ENCODE measurements at regions of chr17 and their contacts with region 1.

Region 1: DNA sequence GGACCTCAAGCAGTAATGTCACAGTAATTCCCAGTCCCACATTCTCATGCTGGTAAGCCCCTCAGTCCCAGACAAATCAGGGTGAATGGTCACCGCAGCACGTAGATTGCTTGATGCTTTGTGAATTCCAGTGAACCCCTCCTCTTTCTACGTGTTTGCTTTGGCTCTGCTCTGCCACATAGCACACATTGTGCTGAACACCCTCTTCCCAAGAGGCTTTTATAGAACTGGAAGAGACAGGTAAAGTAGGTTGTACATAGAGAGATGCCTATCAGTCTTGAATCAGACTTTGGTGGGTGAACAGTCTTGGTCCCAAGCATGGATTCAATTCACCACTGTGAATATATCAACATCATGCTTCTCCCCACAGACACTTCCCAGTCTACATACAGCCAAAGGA is 579 bp upstream of the KRTAP9-6 start:
- DNase-seq: no peak
- ATAC-seq: no peak
- H3K4me3 ChIP-seq: no peak overlapping the region
- H3K4me3 Mint-ChIP-seq: no peak overlapping the region
- H3K27ac ChIP-seq: no peak overlapping the region
- H3K27ac Mint-ChIP-seq: no peak overlapping the region
- H3K4me1 ChIP-seq: no peaks in the 10 kb centered on the region
- H3K4me1 Mint-ChIP-seq: peaks cover 0 to 27% (median 15%) of the 10 kb centered on the region in 7 donors
- H3K27me3 ChIP-seq: no peaks in the 10 kb centered on the region
- H3K27me3 Mint-ChIP-seq: peaks cover 0 to 33% (median 5%) of the 10 kb centered on the region in 5 donors

Region 2: GRCh38 chr17:41278176-41278955 is 13.8 kb after region 1 on chr17:
- CTCF ChIA-PET with region 1: no interaction called
- POLR2A ChIA-PET with region 1: no interaction called
- intact Hi-C with region 1: loop called in 1 of 2 experiments (anchors 1 kb)
- DNase-seq: no peak
- ATAC-seq: no peak
- H3K4me3 ChIP-seq: no peak overlapping the region
- H3K4me3 Mint-ChIP-seq: no peak overlapping the region
- H3K27ac ChIP-seq: no peak overlapping the region
- H3K27ac Mint-ChIP-seq: peak overlapping the region in 1 of 9 donors; percentile 32
- H3K4me1 ChIP-seq: no peaks in the 10 kb centered on the region
- H3K4me1 Mint-ChIP-seq: peaks cover 0 to 11% (median 0%) of the 10 kb centered on the region in 7 donors
- H3K27me3 ChIP-seq: no peaks in the 10 kb centered on the region
- H3K27me3 Mint-ChIP-seq: peaks cover 4 to 20% (median 6%) of the 10 kb centered on the region in 5 donors

Region 3: GRCh38 chr17:41308251-41308917 is 43.8 kb after region 1 on chr17:
- CTCF ChIA-PET with region 1: interaction called, 3 read pairs
- POLR2A ChIA-PET with region 1: no interaction called
- intact Hi-C with region 1: loop called in 1 of 2 experiments (anchors 5 kb)
- DNase-seq: peak in 8 of 9 donors; percentile 56 to 94 (median 92)
- ATAC-seq: peak; percentile 91
- H3K4me3 ChIP-seq: peak overlapping the region; percentile 24
- H3K4me3 Mint-ChIP-seq: peak overlapping the region; percentile 65 to 89 (median 78)
- H3K27ac ChIP-seq: peak overlapping the region; percentile 75
- H3K27ac Mint-ChIP-seq: peak overlapping the region; percentile 82 to 100 (median 98)
- H3K4me1 ChIP-seq: peaks cover 41 to 49% of the 10 kb centered on the region in 2 donors
- H3K4me1 Mint-ChIP-seq: peaks cover 28 to 80% (median 70%) of the 10 kb centered on the region in 7 donors
- H3K27me3 ChIP-seq: no peaks in the 10 kb centered on the region
- H3K27me3 Mint-ChIP-seq: peaks cover 0 to 8% (median 0%) of the 10 kb centered on the region in 5 donors

Region 4: DNA sequence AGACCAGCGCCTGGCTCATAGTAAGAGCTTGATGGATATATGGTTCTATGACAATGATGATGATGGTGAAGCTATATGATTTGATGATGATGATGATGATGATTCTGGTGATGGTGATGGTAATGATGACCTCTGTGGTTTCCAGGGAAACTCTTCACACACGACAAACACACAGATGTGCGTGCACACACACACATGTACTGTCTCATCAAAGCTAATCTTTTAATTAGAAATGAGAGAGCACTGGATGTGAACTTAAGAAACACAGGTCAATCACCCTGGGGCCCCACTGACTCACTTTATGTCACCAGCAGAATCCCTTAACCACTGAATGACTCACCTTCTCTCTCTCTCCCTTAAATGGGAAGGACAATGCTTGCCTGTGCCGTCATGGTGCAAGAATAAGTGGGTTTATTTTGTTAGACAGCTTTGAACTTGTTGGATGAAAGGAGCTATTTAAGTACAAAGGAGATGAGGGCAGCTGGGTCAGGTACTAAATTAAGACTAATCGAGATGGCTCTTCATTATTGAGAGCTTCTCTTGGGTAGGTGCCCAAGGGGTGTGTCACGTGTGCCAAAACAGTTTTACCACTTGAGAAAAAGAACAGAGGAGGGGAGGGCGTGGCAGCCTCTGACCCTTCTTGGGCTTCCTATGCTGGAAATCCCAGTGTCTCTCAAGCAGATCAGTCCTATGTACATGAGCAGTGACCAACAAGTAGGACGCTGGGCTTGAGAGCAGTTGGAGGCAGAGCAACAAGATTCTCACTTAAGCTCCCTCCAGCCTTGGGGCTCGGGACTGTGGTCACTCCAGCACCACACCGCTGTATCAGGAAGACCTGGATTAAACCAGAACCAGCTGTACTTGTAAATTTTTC is 139.4 kb after region 1 on chr17:
- CTCF ChIA-PET with region 1: no interaction called
- POLR2A ChIA-PET with region 1: no interaction called
- intact Hi-C with region 1: no loop called
- DNase-seq: peak in 1 of 9 donors; percentile 46
- ATAC-seq: peak; percentile 62
- H3K4me3 ChIP-seq: no peak overlapping the region
- H3K4me3 Mint-ChIP-seq: peak overlapping the region in 2 of 10 donors; percentile 4 to 39
- H3K27ac ChIP-seq: no peak overlapping the region
- H3K27ac Mint-ChIP-seq: peak overlapping the region in 4 of 9 donors; percentile 3 to 69 (median 13)
- H3K4me1 ChIP-seq: peaks cover 16 to 17% of the 10 kb centered on the region in 2 donors
- H3K4me1 Mint-ChIP-seq: peaks cover 18 to 43% (median 33%) of the 10 kb centered on the region in 7 donors
- H3K27me3 ChIP-seq: no peaks in the 10 kb centered on the region
- H3K27me3 Mint-ChIP-seq: peaks cover 0 to 6% (median 0%) of the 10 kb centered on the region in 5 donors

Measured in naive thymus-derived CD4-positive, alpha-beta T cell (primary cell).